B cell (primary cell): ENCODE measurements at regions of chr1 and their contacts with region 1.

Region 1: GRCh38 chr1:51729156-51729823 is 112.4 kb downstream of the OSBPL9 start:
- DNase-seq: peak; percentile 96
- ATAC-seq: peak; percentile 96
- H3K4me3 ChIP-seq: peak overlapping the region; percentile 72 to 98 (median 89)
- H3K4me3 Mint-ChIP-seq: peak overlapping the region; percentile 91
- H3K27ac ChIP-seq: peak overlapping the region; percentile 56 to 76
- H3K27ac Mint-ChIP-seq: peak overlapping the region; percentile 88
- H3K4me1 ChIP-seq: peaks cover 13 to 20% of the 10 kb centered on the region in 2 donors
- H3K4me1 Mint-ChIP-seq: peaks cover 41% of the 10 kb centered on the region
- H3K27me3 ChIP-seq: no peaks in the 10 kb centered on the region
- H3K27me3 Mint-ChIP-seq: no peaks in the 10 kb centered on the region
- CTCF ChIP-seq: no peak

Region 2: DNA sequence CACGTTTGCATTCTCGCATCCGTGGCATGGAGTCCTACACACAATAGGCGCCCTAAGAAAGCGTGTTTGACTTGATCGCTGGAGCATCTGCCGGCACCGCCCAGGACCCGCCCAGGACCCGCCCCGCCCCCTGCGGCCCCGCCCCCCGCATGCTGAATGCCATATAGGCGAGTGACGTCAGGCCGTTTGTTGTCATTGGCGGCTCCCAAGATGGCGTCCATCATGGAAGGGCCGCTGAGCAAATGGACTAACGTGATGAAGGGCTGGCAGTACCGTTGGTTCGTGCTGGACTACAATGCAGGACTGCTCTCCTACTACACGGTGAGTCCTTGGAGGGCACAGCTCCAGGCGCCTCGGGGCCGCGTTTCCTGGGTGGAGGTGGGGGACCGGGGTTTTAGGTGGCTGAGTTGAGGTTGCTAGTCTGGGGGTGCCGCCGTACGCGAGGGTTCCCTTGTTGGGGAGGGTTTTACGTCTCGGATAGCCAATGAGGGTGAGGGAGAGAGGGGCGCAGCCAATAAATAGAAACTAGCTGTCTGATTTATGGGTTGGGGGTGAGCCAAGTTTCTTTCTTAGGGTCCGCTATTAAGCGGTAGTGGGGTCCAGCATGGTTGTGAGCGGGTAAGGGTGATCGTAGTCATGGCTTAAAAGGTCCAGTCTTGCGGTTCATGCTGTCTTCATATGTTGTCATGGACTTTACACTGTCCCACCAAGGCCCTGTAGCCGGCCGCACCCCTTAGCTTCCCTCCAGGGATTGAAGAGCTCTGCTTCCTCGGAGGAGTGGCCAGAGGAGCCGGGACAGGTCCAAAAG is 112.2 kb before region 1 on chr1 and contains the start of gene OSBPL9:
- CTCF ChIA-PET with region 1: no interaction called
- POLR2A ChIA-PET with region 1: no interaction called
- intact Hi-C with region 1: loop called (anchors 1 kb)
- DNase-seq: peak; percentile 92
- ATAC-seq: peak; percentile 98
- H3K4me3 ChIP-seq: peak within 1 kb of the TSS; percentile 87 to 93 (median 90)
- H3K4me3 Mint-ChIP-seq: peak within 1 kb of the TSS; percentile 100
- H3K27ac ChIP-seq: peak within 1 kb of the TSS; percentile 65 to 85
- H3K27ac Mint-ChIP-seq: peak within 1 kb of the TSS; percentile 99
- H3K4me1 ChIP-seq: peaks cover 11 to 19% of the 10 kb centered on the region in 2 donors
- H3K4me1 Mint-ChIP-seq: peaks cover 32% of the 10 kb centered on the region
- H3K27me3 ChIP-seq: no peaks in the 10 kb centered on the region
- H3K27me3 Mint-ChIP-seq: no peaks in the 10 kb centered on the region
- CTCF ChIP-seq: no peak
- total RNA-seq, gene OSBPL9: 59.6 and 63.8 TPM in 2 replicates

Region 3: GRCh38 chr1:51679435-51679834 is 49.9 kb before region 1 on chr1:
- CTCF ChIA-PET with region 1: no interaction called
- POLR2A ChIA-PET with region 1: no interaction called
- intact Hi-C with region 1: no loop called
- DNase-seq: no peak
- ATAC-seq: no peak
- H3K4me3 ChIP-seq: no peak overlapping the region
- H3K4me3 Mint-ChIP-seq: no peak overlapping the region
- H3K27ac ChIP-seq: no peak overlapping the region
- H3K27ac Mint-ChIP-seq: no peak overlapping the region
- H3K4me1 ChIP-seq: no peaks in the 10 kb centered on the region
- H3K4me1 Mint-ChIP-seq: peaks cover 3% of the 10 kb centered on the region
- H3K27me3 ChIP-seq: no peaks in the 10 kb centered on the region
- H3K27me3 Mint-ChIP-seq: no peaks in the 10 kb centered on the region
- CTCF ChIP-seq: no peak

Region 4: GRCh38 chr1:51699376-51699775 is 29.9 kb before region 1 on chr1:
- CTCF ChIA-PET with region 1: no interaction called
- POLR2A ChIA-PET with region 1: no interaction called
- intact Hi-C with region 1: no loop called
- DNase-seq: no peak
- ATAC-seq: no peak
- H3K4me3 ChIP-seq: no peak overlapping the region
- H3K4me3 Mint-ChIP-seq: no peak overlapping the region
- H3K27ac ChIP-seq: no peak overlapping the region
- H3K27ac Mint-ChIP-seq: no peak overlapping the region
- H3K4me1 ChIP-seq: no peaks in the 10 kb centered on the region
- H3K4me1 Mint-ChIP-seq: peaks cover 3% of the 10 kb centered on the region
- H3K27me3 ChIP-seq: no peaks in the 10 kb centered on the region
- H3K27me3 Mint-ChIP-seq: no peaks in the 10 kb centered on the region
- CTCF ChIP-seq: no peak

Region 5: DNA sequence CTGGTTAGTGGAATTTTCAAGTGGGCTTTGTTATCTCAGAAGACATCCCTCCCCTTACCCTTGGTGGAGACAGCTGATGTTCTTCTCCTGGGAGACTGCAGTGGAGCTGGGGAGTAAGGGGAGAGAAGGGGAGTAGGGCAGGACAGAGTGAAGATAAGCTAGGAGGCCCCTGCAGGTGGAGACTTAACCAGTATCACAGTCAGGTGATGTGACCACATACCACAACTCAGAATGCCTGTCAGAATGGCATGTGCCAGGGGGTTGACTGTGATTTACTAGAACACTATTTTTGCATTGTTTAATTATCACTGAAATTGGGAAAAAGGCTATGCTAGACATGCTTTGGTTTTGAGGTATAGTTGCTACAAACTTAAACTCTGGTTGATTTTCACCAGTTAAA is 24.7 kb after region 1 on chr1:
- CTCF ChIA-PET with region 1: no interaction called
- POLR2A ChIA-PET with region 1: no interaction called
- intact Hi-C with region 1: no loop called
- DNase-seq: no peak
- ATAC-seq: no peak
- H3K4me3 ChIP-seq: no peak overlapping the region
- H3K4me3 Mint-ChIP-seq: no peak overlapping the region
- H3K27ac ChIP-seq: no peak overlapping the region
- H3K27ac Mint-ChIP-seq: no peak overlapping the region
- H3K4me1 ChIP-seq: no peaks in the 10 kb centered on the region
- H3K4me1 Mint-ChIP-seq: no peaks in the 10 kb centered on the region
- H3K27me3 ChIP-seq: no peaks in the 10 kb centered on the region
- H3K27me3 Mint-ChIP-seq: no peaks in the 10 kb centered on the region
- CTCF ChIP-seq: no peak

Region 6: DNA sequence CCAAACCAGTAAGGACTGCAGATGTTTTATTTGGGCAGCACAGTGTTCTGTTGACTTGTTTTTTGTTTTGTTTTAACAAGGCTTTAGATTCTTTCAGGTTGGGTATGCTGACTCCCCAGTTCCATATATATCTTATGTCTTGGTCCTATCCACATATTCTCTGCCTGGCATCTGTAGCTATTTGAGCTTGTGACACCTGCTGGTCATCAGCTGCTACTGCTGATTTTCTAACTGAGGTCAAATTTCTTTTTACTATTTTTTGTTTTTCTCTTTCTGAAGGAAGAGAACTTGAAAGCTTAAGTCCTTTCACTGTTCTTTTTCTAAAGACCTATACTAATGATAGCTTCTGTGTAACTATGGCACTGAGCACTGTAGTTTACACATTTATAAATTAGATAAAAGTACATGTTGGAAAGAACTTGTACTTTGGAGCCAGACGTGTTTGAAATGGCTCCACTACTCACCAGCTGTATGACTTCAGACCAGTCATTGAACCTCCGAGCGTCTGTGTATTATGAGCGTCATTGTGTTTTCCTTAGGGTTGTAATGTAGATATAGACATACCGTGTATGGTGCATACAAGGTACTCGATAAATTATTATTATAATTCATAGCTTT is 39.8 kb after region 1 on chr1:
- CTCF ChIA-PET with region 1: interaction called, 5 read pairs
- POLR2A ChIA-PET with region 1: interaction called, 4 read pairs
- intact Hi-C with region 1: loop called (anchors 2 kb)
- DNase-seq: peak; percentile 63
- ATAC-seq: peak; percentile 54
- H3K4me3 ChIP-seq: no peak overlapping the region
- H3K4me3 Mint-ChIP-seq: no peak overlapping the region
- H3K27ac ChIP-seq: no peak overlapping the region
- H3K27ac Mint-ChIP-seq: no peak overlapping the region
- H3K4me1 ChIP-seq: no peaks in the 10 kb centered on the region
- H3K4me1 Mint-ChIP-seq: peaks cover 13% of the 10 kb centered on the region
- H3K27me3 ChIP-seq: no peaks in the 10 kb centered on the region
- H3K27me3 Mint-ChIP-seq: no peaks in the 10 kb centered on the region
- CTCF ChIP-seq: peak; percentile 94

Region 7: GRCh38 chr1:51776408-51776807 is 47.1 kb after region 1 on chr1:
- CTCF ChIA-PET with region 1: no interaction called
- POLR2A ChIA-PET with region 1: interaction called, 10 read pairs
- intact Hi-C with region 1: no loop called
- DNase-seq: no peak
- ATAC-seq: no peak
- H3K4me3 ChIP-seq: no peak overlapping the region
- H3K4me3 Mint-ChIP-seq: peak overlapping the region; percentile 32
- H3K27ac ChIP-seq: peak overlapping the region in 1 of 2 donors; percentile 35
- H3K27ac Mint-ChIP-seq: peak overlapping the region; percentile 38
- H3K4me1 ChIP-seq: peaks cover 6 to 9% of the 10 kb centered on the region in 2 donors
- H3K4me1 Mint-ChIP-seq: peaks cover 26% of the 10 kb centered on the region
- H3K27me3 ChIP-seq: no peaks in the 10 kb centered on the region
- H3K27me3 Mint-ChIP-seq: no peaks in the 10 kb centered on the region
- CTCF ChIP-seq: no peak

Region 8: GRCh38 chr1:51897699-51898031 is 168.4 kb after region 1 on chr1:
- CTCF ChIA-PET with region 1: no interaction called
- POLR2A ChIA-PET with region 1: interaction called, 16 read pairs
- intact Hi-C with region 1: no loop called
- DNase-seq: no peak
- ATAC-seq: no peak
- H3K4me3 ChIP-seq: no peak overlapping the region
- H3K4me3 Mint-ChIP-seq: no peak overlapping the region
- H3K27ac ChIP-seq: no peak overlapping the region
- H3K27ac Mint-ChIP-seq: no peak overlapping the region
- H3K4me1 ChIP-seq: no peaks in the 10 kb centered on the region
- H3K4me1 Mint-ChIP-seq: peaks cover 2% of the 10 kb centered on the region
- H3K27me3 ChIP-seq: peaks cover 0 to 14% (median 4%) of the 10 kb centered on the region in 4 experiments
- H3K27me3 Mint-ChIP-seq: peaks cover 57% of the 10 kb centered on the region
- CTCF ChIP-seq: no peak